HEK293 (cell line): ENCODE measurements at regions of chr2 and their contacts with region 1.

Region 1: DNA sequence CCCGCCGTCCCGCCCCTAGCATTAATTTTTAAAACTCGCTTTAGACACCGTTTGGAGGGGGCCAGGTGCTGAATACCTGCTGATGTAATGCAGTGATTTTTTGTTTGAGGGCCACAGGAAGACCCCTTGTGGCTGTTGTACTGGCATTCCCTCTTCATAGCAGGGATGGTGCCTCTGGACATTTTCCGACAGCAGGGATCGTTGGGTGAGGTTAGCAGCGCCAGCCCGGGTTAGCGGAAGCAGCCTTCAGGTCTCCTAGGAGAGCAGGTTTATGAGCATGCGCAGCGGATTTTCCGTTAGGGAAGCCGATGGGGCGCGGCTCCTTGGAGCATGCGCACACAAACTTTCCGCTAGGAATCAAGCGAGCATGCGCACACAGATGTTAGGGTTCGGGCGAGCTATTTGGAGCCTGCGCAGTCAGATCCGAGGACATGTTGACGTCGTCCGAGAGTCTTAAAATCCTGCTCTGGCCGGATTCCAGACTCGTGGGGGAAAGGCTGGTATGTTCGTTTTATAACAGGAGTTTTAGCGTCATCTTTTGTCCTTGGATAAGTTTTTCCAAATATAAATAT is 17.2 kb upstream of the C2orf74 start:
- H3K4me3 ChIP-seq: peak overlapping the region; percentile 55
- H3K27ac ChIP-seq: peak overlapping the region; percentile 38; the same call in 1 of the 2 replicates
- H3K4me1 ChIP-seq: no peaks in the 10 kb centered on the region
- CTCF ChIP-seq: peak; percentile 57

Region 2: GRCh38 chr2:61157371-61158003 is 12.7 kb after region 1 on chr2:
- CTCF ChIA-PET with region 1: no interaction called
- POLR2A ChIA-PET with region 1: interaction called, 10 read pairs
- H3K4me3 ChIP-seq: no peak overlapping the region
- H3K27ac ChIP-seq: no peak overlapping the region
- H3K4me1 ChIP-seq: no peaks in the 10 kb centered on the region
- CTCF ChIP-seq: no peak

Region 3: GRCh38 chr2:61176755-61177726 is 32.3 kb after region 1 on chr2:
- CTCF ChIA-PET with region 1: no interaction called
- POLR2A ChIA-PET with region 1: interaction called, 12 read pairs
- H3K4me3 ChIP-seq: peak overlapping the region; percentile 77
- H3K27ac ChIP-seq: peak overlapping the region; percentile 85
- H3K4me1 ChIP-seq: no peaks in the 10 kb centered on the region
- CTCF ChIP-seq: peak; percentile 79

Region 4: GRCh38 chr2:61443342-61444041 is 298.7 kb after region 1 on chr2:
- CTCF ChIA-PET with region 1: no interaction called
- POLR2A ChIA-PET with region 1: no interaction called
- H3K4me3 ChIP-seq: no peak overlapping the region
- H3K27ac ChIP-seq: no peak overlapping the region
- H3K4me1 ChIP-seq: no peaks in the 10 kb centered on the region
- CTCF ChIP-seq: no peak